ENCODE measurements at regions of chr12 and their contacts with region 1.

Region 1: GRCh38 chr12:107685360-107686248 is at the start of gene PWP1:
- DNase-seq: peak; percentile 98
- H3K4me3 ChIP-seq: peak within 1 kb of the TSS; percentile 75 to 91 (median 78)
- H3K27ac ChIP-seq: peak within 1 kb of the TSS; percentile 68 to 86 (median 75)
- H3K4me1 ChIP-seq: peaks cover 14 to 32% (median 22%) of the 10 kb centered on the region in 4 donors
- H3K27me3 ChIP-seq: peaks cover 0 to 8% (median 0%) of the 10 kb centered on the region in 4 donors
- CTCF ChIP-seq: peak in 1 of 3 experiments; percentile 21
- EP300 ChIP-seq: no peak
- POLR2A ChIP-seq: no peak
- total RNA-seq, gene PWP1: 39.7 to 98.7 (median 49.6) TPM

Region 2: DNA sequence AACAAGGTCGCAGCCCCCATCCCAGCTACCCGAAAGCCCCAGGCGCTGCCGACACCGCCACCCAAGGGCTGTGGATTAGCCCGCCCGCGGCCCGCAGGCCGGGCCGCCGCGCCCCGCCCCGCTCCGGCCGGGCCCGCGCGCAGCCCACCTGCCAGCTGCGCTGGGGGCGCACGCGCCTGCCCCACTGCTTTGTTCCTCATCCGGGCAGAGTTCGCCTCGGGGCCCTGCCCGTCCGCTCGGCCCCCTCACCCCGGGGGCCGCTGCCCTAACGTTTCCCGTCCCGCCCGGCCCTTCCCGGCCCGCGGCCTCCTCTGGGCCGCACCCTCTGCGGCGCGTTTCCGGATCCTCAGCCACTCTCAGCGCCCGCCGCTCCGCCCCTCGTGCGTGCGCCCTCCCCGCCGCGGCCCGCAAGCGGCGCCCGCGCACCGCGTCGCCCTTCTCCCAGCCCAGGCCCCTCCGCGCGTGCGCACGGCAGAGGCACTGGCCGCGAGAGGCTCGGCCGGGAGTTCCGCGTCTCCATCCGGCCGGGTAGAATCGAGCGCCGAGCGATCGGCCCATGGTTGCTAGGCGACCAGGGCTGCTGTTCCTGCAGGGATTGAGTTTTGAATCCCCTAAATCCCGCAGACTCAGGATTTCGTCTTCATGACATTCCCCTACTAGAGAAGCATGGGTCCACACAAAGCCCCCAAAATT is 75.4 kb after region 1 on chr12 and contains the start of gene PRDM4:
- intact Hi-C with region 1: loop called (anchors 5 kb)
- DNase-seq: peak; percentile 97
- H3K4me3 ChIP-seq: peak within 1 kb of the TSS; percentile 82 to 91 (median 84)
- H3K27ac ChIP-seq: peak within 1 kb of the TSS; percentile 69 to 79 (median 77)
- H3K4me1 ChIP-seq: peaks cover 23 to 42% (median 38%) of the 10 kb centered on the region in 4 donors
- H3K27me3 ChIP-seq: no peaks in the 10 kb centered on the region
- CTCF ChIP-seq: peak; percentile 40 to 63 (median 43)
- EP300 ChIP-seq: no peak
- POLR2A ChIP-seq: peak; percentile 65
- total RNA-seq, gene PRDM4: 18.3 to 29.4 (median 26.8) TPM

Measured in esophagus muscularis mucosa (tissue), 4 donors.